Mucosa of descending colon (tissue), 3 donors: ENCODE measurements at regions of chr1 and their contacts with region 1.

Region 1: GRCh38 chr1:178273707-178274410 is 180.0 kb downstream of the RASAL2 start:
- DNase-seq: no peak
- ATAC-seq: no peak
- H3K4me3 ChIP-seq: no peak overlapping the region
- H3K4me1 ChIP-seq: no peaks in the 10 kb centered on the region
- CTCF ChIP-seq: no peak

Region 2: DNA sequence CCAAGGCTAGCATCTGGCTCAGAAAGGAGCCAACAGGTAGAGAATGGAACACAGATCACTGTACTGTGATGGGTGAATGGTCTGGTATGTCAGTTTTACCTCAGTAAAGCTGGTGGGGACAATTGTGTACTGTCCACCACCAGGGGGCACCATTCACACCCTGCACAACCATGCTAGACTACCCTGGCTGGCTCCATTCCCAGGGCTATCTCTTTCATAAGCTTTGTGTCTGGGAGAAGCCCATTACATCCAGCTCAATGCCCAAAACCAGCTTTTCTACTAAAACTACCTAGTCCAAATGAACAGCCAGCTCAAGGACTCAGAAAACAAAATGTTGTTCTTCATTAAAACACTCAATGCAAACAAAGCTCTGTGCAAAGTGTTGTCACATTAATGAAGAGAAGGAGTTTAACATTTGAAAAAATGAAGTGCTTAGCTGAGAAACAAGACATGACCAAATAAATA is 242.0 kb before region 1 on chr1:
- intact Hi-C with region 1: loop called in 1 of 2 experiments (anchors 10 kb)
- DNase-seq: peak; percentile 60 to 97 (median 78)
- ATAC-seq: peak; percentile 98
- H3K4me3 ChIP-seq: no peak overlapping the region
- H3K4me1 ChIP-seq: peaks cover 6% of the 10 kb centered on the region
- CTCF ChIP-seq: peak; percentile 85

Region 3: GRCh38 chr1:178093205-178093957 is 180.5 kb before region 1 on chr1:
- intact Hi-C with region 1: loop called in 1 of 2 experiments (anchors 10 kb)
- DNase-seq: peak; percentile 91 to 92 (median 91)
- ATAC-seq: peak; percentile 95
- H3K4me3 ChIP-seq: peak overlapping the region; percentile 92
- H3K4me1 ChIP-seq: peaks cover 15% of the 10 kb centered on the region
- CTCF ChIP-seq: no peak

Region 4: DNA sequence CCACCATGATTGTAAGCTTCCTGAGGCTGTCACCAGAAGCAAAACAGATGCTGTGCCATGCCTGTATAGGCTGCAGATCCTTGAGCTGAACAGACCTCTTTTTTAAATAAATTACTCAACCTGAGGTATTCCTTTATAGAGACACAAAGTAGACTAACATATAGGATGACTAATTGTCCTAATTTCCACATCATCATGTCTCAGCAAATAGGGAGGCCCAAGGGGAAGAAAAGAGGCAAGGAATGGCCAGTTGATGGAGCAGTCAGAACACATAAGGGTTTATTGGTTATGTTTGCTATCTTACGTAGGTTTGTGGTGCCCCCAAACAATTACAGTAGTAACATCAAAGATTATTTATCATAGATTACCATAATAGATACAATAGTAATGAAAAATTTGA is 53.8 kb before region 1 on chr1:
- intact Hi-C with region 1: no loop called
- DNase-seq: no peak
- ATAC-seq: no peak
- H3K4me3 ChIP-seq: no peak overlapping the region
- H3K4me1 ChIP-seq: no peaks in the 10 kb centered on the region
- CTCF ChIP-seq: no peak

Region 5: GRCh38 chr1:178388418-178389145 is 114.7 kb after region 1 on chr1:
- intact Hi-C with region 1: no loop called
- DNase-seq: no peak
- ATAC-seq: no peak
- H3K4me3 ChIP-seq: no peak overlapping the region
- H3K4me1 ChIP-seq: no peaks in the 10 kb centered on the region
- CTCF ChIP-seq: no peak